CD14-positive monocyte (primary cell): ENCODE measurements at regions of chr2 and their contacts with region 1.

Region 1: GRCh38 chr2:28102455-28102874 is 211.9 kb downstream of the BABAM2 start:
- DNase-seq: no peak
- H3K4me3 ChIP-seq: no peak overlapping the region
- H3K4me3 Mint-ChIP-seq: no peak overlapping the region
- H3K27ac ChIP-seq: no peak overlapping the region
- H3K27ac Mint-ChIP-seq: no peak overlapping the region
- H3K4me1 ChIP-seq: no peaks in the 10 kb centered on the region
- H3K4me1 Mint-ChIP-seq: peaks cover 2% of the 10 kb centered on the region
- H3K27me3 ChIP-seq: no peaks in the 10 kb centered on the region
- H3K27me3 Mint-ChIP-seq: peaks cover 0 to 5% (median 0%) of the 10 kb centered on the region in 3 donors
- CTCF ChIP-seq: no peak

Region 2: GRCh38 chr2:27703638-27704341 is 398.7 kb before region 1 on chr2:
- intact Hi-C with region 1: no loop called
- DNase-seq: peak; percentile 79 to 90 (median 85)
- H3K4me3 ChIP-seq: no peak overlapping the region
- H3K4me3 Mint-ChIP-seq: no peak overlapping the region
- H3K27ac ChIP-seq: no peak overlapping the region
- H3K27ac Mint-ChIP-seq: peak overlapping the region in 3 of 7 donors; percentile 10 to 68 (median 24)
- H3K4me1 ChIP-seq: peaks cover 22 to 25% of the 10 kb centered on the region in 2 donors
- H3K4me1 Mint-ChIP-seq: peaks cover 26% of the 10 kb centered on the region
- H3K27me3 ChIP-seq: no peaks in the 10 kb centered on the region
- H3K27me3 Mint-ChIP-seq: peaks cover 0 to 1% (median 0%) of the 10 kb centered on the region in 3 donors
- CTCF ChIP-seq: peak; percentile 91

Region 3: GRCh38 chr2:28155627-28156026 is 53.2 kb after region 1 on chr2:
- intact Hi-C with region 1: no loop called
- DNase-seq: no peak
- H3K4me3 ChIP-seq: no peak overlapping the region
- H3K4me3 Mint-ChIP-seq: no peak overlapping the region
- H3K27ac ChIP-seq: no peak overlapping the region
- H3K27ac Mint-ChIP-seq: no peak overlapping the region
- H3K4me1 ChIP-seq: no peaks in the 10 kb centered on the region
- H3K4me1 Mint-ChIP-seq: peaks cover 4% of the 10 kb centered on the region
- H3K27me3 ChIP-seq: no peaks in the 10 kb centered on the region
- H3K27me3 Mint-ChIP-seq: no peaks in the 10 kb centered on the region
- CTCF ChIP-seq: peak; percentile 70

Region 4: DNA sequence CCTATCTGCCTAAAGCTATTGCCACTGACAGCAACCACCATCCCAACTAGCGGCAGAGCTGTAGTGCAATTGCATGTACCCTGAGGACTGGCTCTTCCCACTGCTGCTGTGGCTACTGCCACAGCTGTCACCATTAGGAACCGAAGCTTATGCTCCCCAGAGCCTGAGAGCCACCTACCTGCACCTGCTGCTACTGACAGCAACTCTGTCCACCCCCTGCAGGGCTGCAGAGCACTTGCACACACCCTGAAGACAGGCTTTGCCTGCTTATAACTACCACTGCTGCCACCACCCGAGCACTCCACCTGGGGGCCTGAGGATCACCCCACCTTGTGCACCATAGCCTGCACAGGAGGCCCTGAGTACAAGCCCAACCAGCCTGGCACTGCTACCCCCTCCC is 72.6 kb after region 1 on chr2:
- intact Hi-C with region 1: loop called in 1 of 2 experiments (anchors 10 kb)
- DNase-seq: no peak
- H3K4me3 ChIP-seq: no peak overlapping the region
- H3K4me3 Mint-ChIP-seq: no peak overlapping the region
- H3K27ac ChIP-seq: no peak overlapping the region
- H3K27ac Mint-ChIP-seq: peak overlapping the region in 2 of 7 donors; percentile 42 to 66
- H3K4me1 ChIP-seq: no peaks in the 10 kb centered on the region
- H3K4me1 Mint-ChIP-seq: peaks cover 8% of the 10 kb centered on the region
- H3K27me3 ChIP-seq: no peaks in the 10 kb centered on the region
- H3K27me3 Mint-ChIP-seq: no peaks in the 10 kb centered on the region
- CTCF ChIP-seq: no peak

Region 5: GRCh38 chr2:29596584-29596983 is 1494.1 kb after region 1 on chr2:
- intact Hi-C with region 1: no loop called
- DNase-seq: no peak
- H3K4me3 ChIP-seq: no peak overlapping the region
- H3K4me3 Mint-ChIP-seq: no peak overlapping the region
- H3K27ac ChIP-seq: no peak overlapping the region
- H3K27ac Mint-ChIP-seq: no peak overlapping the region
- H3K4me1 ChIP-seq: no peaks in the 10 kb centered on the region
- H3K4me1 Mint-ChIP-seq: no peaks in the 10 kb centered on the region
- H3K27me3 ChIP-seq: no peaks in the 10 kb centered on the region
- H3K27me3 Mint-ChIP-seq: peaks cover 1 to 3% (median 3%) of the 10 kb centered on the region in 3 donors
- CTCF ChIP-seq: no peak